Dorsolateral prefrontal cortex (tissue), 120 donors: ENCODE measurements at regions of chr2 and their contacts with region 1.

Region 1: GRCh38 chr2:134460583-134460998 is 206.7 kb downstream of the MGAT5 start:
- DNase-seq: peak; percentile 43 to 95 (median 78)
- H3K4me3 ChIP-seq: no peak overlapping the region
- H3K27ac ChIP-seq: peak overlapping the region in 1 of 59 donors; percentile 66
- H3K27me3 ChIP-seq: no peaks in the 10 kb centered on the region
- CTCF ChIP-seq: peak in 55 of 56 donors; percentile 41 to 77 (median 66)

Region 2: DNA sequence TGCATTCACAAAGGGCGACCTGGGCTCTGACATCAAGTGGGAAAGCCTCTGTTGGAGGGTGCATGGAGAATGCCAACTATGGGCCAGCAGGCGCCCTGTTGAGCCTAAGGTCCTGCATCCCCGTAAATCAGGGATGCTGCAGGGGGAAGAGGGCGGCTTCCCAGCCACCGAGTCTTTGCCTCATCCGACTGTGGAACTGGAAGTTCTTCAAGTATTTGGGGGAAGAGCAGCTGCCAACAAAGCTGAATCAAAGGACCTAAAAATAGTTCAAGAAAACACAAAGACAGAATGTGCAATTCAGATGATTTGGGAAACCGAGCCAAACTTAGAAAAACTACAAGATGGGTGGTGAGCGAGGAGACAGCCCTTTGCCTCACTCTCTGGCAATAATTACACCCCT is 487.8 kb before region 1 on chr2:
- intact Hi-C with region 1: no loop called
- DNase-seq: peak in 5 of 10 donors; percentile 24 to 58 (median 52)
- H3K4me3 ChIP-seq: no peak overlapping the region
- H3K27ac ChIP-seq: peak overlapping the region in 11 of 59 donors; percentile 6 to 57 (median 25)
- H3K27me3 ChIP-seq: no peaks in the 10 kb centered on the region
- CTCF ChIP-seq: no peak

Region 3: DNA sequence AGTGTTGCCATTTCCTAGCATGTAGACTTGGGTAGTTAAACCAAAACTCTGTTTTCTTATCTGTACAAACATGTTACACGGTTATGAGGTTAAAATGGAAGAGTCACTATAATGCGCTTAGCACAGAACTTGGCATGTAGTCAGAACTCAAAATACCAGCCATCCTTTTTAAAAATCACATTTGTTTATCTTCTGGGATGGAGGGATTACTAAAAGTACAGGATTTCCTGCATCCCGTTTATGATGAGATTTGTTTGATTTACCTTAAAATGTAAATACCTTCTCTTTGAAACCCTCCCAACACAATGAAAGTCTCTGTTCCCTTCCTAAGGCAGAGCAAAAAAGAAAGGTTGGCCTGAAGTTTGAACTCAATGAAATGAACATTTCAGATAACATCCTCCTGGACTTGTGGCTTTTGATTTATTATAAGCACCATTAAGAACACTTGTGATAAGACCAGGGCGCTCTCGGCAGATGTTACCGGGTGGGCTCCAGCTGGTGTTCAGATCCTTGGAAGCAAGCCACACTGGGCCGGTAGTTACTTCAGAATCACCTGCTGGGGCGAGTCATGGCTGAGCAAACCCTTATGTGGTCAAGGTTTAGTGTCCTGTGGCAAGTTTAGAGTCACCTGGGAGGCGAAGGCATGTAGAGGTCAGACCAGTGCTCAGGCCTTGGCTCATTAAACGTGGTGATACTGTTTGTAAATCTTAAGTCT is 101.1 kb before region 1 on chr2:
- intact Hi-C with region 1: no loop called
- DNase-seq: no peak
- H3K4me3 ChIP-seq: no peak overlapping the region
- H3K27ac ChIP-seq: peak overlapping the region in 6 of 59 donors; percentile 51 to 85 (median 82)
- H3K27me3 ChIP-seq: no peaks in the 10 kb centered on the region
- CTCF ChIP-seq: no peak

Region 4: DNA sequence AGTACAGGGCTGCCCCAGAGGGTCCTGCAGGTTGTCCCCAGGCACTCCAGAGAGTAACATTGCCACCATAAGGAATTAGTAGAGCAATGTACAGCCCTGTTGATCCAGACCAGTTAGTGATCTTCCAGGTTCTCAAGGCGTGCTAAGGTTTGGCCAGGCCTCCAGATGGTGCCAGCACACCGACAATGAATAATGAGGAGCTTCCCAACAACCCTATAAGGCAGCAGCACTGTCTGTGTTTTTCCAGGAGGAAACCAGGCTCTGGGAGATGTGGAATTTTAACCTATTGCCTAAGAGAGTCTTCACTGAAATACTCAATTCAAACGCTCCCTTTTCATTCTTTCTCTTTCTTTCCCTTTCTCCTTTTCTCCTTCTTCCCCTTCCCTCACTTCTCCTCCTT is 84.7 kb before region 1 on chr2:
- intact Hi-C with region 1: loop called in 1 of 2 experiments (anchors 10 kb)
- DNase-seq: peak; percentile 42 to 79 (median 66)
- H3K4me3 ChIP-seq: peak overlapping the region in 1 of 59 donors; percentile 2
- H3K27ac ChIP-seq: peak overlapping the region in 43 of 59 donors; percentile 4 to 87 (median 50)
- H3K27me3 ChIP-seq: no peaks in the 10 kb centered on the region
- CTCF ChIP-seq: peak in 55 of 56 donors; percentile 23 to 78 (median 51)

Region 5: DNA sequence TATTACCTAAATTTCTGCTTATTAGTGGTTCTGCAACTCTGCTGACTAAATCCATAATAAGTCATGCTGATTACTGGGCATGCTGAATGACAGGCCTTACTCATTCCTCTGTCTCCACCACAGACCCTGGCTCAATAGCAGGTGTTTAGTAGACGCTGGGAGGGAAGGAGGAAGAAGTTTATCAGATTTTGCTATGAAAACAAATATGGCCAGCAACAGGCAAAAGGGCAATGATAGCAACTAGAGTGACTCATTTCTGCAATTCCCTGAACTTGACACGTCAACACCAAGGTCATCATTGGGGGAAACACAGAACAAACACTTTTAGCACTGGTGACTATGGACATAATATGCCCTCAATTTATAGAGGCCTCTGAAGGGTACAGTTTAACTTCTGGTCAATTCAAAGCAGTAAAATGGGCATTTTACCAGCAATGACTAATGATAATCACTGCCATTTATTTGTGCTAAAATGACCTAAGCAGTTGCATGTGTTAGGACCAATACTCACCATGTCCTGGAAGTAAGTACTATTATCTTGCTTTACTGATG is 223.0 kb after region 1 on chr2:
- intact Hi-C with region 1: no loop called
- DNase-seq: no peak
- H3K4me3 ChIP-seq: no peak overlapping the region
- H3K27ac ChIP-seq: no peak overlapping the region
- H3K27me3 ChIP-seq: no peaks in the 10 kb centered on the region
- CTCF ChIP-seq: no peak

Region 6: GRCh38 chr2:134782792-134783191 is 322.2 kb after region 1 on chr2:
- intact Hi-C with region 1: loop called in 1 of 2 experiments (anchors 10 kb)
- DNase-seq: no peak
- H3K4me3 ChIP-seq: no peak overlapping the region
- H3K27ac ChIP-seq: peak overlapping the region in 1 of 59 donors; percentile 7
- H3K27me3 ChIP-seq: no peaks in the 10 kb centered on the region
- CTCF ChIP-seq: peak in 15 of 56 donors; percentile 9 to 52 (median 33)

Region 7: GRCh38 chr2:134897932-134898331 is 437.3 kb after region 1 on chr2:
- intact Hi-C with region 1: loop called (anchors 2 to 5 kb)
- DNase-seq: no peak
- H3K4me3 ChIP-seq: no peak overlapping the region
- H3K27ac ChIP-seq: no peak overlapping the region
- H3K27me3 ChIP-seq: no peaks in the 10 kb centered on the region
- CTCF ChIP-seq: peak in 54 of 56 donors; percentile 28 to 76 (median 53)